Breast epithelium (tissue), 4 donors: ENCODE measurements at regions of chr6 and their contacts with region 1.

Region 1: GRCh38 chr6:41457303-41457670 is 88.9 kb upstream of the FOXP4 start:
- DNase-seq: no peak
- H3K4me3 ChIP-seq: no peak overlapping the region
- H3K27ac ChIP-seq: no peak overlapping the region
- H3K4me1 ChIP-seq: no peaks in the 10 kb centered on the region
- H3K27me3 ChIP-seq: no peaks in the 10 kb centered on the region
- CTCF ChIP-seq: no peak
- POLR2A ChIP-seq: no peak

Region 2: GRCh38 chr6:41474213-41474933 is 17.1 kb after region 1 on chr6:
- intact Hi-C with region 1: loop called (anchors 1 kb)
- DNase-seq: no peak
- H3K4me3 ChIP-seq: no peak overlapping the region
- H3K27ac ChIP-seq: no peak overlapping the region
- H3K4me1 ChIP-seq: no peaks in the 10 kb centered on the region
- H3K27me3 ChIP-seq: peaks cover 4 to 9% of the 10 kb centered on the region in 2 donors
- CTCF ChIP-seq: no peak
- POLR2A ChIP-seq: no peak